Activated CD4-positive, alpha-beta T cell treated with anti-CD3 and anti-CD28 coated beads for 36 hours (primary cell): ENCODE measurements at regions of chr6 and their contacts with region 1.

Region 1: DNA sequence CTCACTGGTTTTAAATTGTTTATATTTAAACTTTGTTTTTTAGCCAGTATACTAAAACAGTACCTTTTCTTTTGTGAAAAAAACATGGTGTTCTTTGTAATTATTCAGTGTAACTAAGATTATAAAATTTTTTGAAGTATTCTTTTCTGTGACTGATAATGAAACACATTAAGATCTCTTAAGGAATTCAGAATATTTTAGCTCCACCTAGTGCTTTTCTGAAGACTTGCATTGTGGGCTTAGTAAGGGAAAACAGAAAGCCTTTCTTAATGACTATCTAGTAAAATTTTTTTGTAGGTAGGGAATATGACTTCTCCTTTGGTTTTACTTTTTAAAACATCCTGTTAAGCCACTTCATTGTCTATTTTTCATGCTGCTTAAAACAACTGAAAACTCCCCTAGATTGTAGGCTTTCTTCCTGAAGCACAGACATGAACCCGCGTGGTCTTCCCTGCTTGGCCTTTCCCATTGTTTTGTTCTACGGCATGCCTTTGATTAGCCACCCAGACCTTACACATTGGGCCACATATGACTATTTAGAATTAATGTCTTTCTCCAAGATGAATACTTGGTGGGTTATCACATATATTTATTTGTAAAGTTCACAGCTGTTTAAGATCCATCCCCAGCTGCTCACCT is 72.1 kb downstream of the AFDN start:
- DNase-seq: no peak
- ATAC-seq: no peak
- H3K4me3 Mint-ChIP-seq: no peak overlapping the region
- H3K27ac Mint-ChIP-seq: no peak overlapping the region
- H3K4me1 Mint-ChIP-seq: no peaks in the 10 kb centered on the region
- H3K27me3 Mint-ChIP-seq: no peaks in the 10 kb centered on the region

Region 2: DNA sequence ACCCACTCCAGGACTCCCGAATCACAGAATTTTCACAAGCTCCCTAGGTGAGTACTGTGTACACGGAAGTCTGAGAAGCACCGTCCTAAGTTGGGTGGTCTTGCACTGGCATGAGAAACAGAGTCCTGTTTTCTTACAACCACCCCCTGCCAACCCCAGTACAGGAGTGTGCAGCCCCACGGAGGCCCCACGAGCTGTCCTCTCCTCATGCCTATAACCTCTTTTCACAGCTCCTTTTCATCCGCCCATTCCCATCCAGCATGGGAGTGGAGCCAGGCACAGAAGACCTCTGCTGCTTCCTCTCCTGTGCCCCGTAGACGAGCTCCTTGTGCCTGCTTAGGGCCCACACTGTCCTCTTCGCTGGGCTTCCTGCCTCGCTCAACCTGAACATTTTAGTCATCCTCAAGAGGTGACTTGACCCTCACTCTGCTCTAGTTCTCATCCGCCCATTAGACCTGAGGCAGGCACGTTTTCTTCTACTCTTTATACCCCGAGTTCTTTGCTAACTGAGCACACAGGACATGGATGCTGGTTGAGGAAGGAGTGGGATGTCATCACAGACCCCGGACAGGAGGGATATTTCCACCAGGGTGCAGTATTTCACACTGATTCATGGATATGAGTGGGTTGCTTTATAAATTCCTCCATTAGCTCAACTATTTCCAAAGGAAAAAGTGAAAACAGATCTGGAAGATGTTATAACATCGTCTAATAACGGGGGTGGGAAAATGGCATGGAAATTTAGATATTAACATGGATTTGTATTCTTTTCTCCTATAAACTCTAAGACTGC is 413.4 kb before region 1 on chr6:
- CTCF ChIA-PET with region 1: interaction called, 3 read pairs
- POLR2A ChIA-PET with region 1: no interaction called
- intact Hi-C with region 1: loop called in 1 of 2 experiments (anchors 1 kb)
- DNase-seq: no peak
- ATAC-seq: no peak
- H3K4me3 Mint-ChIP-seq: no peak overlapping the region
- H3K27ac Mint-ChIP-seq: no peak overlapping the region
- H3K4me1 Mint-ChIP-seq: no peaks in the 10 kb centered on the region
- H3K27me3 Mint-ChIP-seq: peaks cover 17% of the 10 kb centered on the region

Region 3: DNA sequence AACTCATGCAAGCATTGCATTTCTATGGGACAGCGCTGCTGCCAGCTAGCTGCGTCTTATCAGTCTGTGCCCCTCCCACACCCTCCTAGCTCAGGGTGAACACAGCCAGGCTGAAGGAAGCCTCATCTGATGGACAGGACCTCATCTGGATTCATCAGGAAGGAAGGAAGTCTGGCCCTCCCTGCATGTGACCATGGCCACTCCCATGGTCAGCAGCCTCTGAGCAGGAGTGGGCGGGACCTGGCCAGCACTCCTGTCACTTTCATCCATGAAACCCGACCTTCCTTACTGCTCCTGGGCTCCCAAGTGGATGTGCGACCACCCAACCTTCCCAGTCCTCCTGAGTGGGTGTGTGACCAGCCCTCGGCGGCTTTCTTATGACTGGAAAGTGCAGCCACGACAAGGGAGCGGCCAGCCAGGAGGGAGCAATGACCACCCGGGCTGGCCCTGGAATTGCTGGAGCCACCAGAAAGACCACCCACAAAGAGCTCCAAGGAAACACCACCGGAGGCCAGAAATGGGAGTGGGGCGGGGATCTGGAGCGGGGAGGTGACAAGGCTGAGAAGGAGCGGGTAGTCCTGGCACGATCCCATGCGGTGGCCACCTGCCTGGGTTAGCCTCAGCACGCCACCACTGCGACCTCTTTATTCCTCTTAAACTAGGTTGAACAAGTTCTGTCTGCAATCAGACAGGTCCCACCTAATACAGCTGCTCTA is 332.8 kb before region 1 on chr6:
- CTCF ChIA-PET with region 1: no interaction called
- POLR2A ChIA-PET with region 1: no interaction called
- intact Hi-C with region 1: no loop called
- DNase-seq: no peak
- ATAC-seq: no peak
- H3K4me3 Mint-ChIP-seq: no peak overlapping the region
- H3K27ac Mint-ChIP-seq: no peak overlapping the region
- H3K4me1 Mint-ChIP-seq: no peaks in the 10 kb centered on the region
- H3K27me3 Mint-ChIP-seq: no peaks in the 10 kb centered on the region

Region 4: DNA sequence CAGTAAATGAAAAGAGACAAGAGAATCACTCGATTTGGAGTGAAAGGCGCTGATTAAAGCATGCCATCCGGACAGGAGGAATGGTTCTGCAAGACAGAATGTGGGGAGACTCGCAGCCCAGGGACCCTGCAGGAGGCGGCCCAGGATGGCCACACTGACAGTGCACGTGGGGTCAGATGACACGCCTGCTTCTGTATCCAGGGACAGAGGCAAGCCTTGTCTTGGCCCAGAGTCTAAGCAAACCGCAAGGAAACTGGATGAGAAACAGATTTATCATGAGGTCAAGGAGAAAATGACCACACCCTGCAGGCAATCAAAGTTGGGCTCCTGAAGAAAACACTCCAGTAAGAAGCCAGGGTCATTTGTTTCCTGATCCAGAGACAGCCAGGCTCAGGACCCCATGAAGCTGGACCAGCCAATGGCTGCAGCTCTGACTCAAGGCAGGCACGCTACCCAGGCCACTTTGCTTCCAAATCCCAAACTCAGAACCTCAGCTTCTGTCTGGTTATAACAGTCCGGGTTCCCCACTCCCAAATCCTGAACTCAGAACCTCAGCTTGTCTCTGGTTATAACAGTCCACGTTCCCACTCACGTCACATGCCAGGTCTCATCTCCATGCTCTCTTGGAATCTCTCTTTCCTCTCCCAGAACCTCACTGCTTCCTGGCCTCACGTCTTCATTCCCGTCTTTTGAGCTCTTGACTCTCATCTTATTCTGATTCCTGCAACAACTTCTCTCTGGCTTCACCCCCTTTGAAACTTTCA is 1499.7 kb after region 1 on chr6:
- CTCF ChIA-PET with region 1: no interaction called
- POLR2A ChIA-PET with region 1: no interaction called
- intact Hi-C with region 1: no loop called
- DNase-seq: no peak
- ATAC-seq: no peak
- H3K4me3 Mint-ChIP-seq: no peak overlapping the region
- H3K27ac Mint-ChIP-seq: no peak overlapping the region
- H3K4me1 Mint-ChIP-seq: no peaks in the 10 kb centered on the region
- H3K27me3 Mint-ChIP-seq: peaks cover 4% of the 10 kb centered on the region

Region 5: DNA sequence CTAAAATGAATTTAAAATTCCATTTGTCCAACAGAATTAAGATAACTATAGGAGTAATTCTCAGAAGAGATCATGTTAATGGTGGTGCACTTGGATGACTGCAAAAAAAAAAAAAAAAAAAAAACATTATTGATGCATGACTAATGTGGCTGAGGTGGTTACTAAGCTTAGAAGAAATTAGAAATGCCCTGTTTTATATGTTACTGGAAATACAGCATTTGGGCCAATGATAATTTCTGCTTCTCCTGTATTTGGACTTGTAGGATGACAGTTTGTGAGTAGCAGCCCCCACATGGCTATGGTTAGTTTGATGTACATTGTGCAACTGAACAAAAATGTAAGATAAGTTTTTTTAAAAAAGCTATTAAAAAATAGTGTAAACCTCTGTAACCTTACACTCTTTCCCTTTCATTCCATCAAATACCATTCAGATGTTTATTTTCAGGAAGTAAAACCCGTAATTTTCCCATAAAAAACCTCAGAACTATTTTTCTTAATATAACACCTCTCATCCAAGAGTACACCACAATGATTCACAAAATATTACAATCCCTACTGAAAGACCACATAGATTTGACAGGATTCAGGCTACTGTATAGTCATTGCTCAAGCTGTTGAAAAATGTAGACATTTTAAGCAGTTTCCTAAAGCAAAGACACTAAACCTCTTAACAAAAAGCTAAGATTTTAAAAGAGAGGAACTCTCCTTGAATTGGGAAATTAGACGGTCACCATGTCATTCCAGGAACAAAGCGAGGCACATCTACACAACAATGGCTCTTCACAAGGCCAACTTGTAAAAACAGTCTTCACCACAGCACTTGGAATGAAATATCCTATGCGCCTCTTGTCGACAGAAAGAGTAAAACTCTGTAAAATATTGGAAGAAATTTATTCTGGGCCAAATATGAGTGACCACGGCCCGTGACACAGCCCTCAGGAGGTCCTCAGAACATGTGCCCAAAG is 1720.0 kb after region 1 on chr6:
- CTCF ChIA-PET with region 1: no interaction called
- POLR2A ChIA-PET with region 1: no interaction called
- intact Hi-C with region 1: no loop called
- DNase-seq: no peak
- ATAC-seq: no peak
- H3K4me3 Mint-ChIP-seq: no peak overlapping the region
- H3K27ac Mint-ChIP-seq: no peak overlapping the region
- H3K4me1 Mint-ChIP-seq: no peaks in the 10 kb centered on the region
- H3K27me3 Mint-ChIP-seq: no peaks in the 10 kb centered on the region